Activated B cell treated with CpG ODN at 0.5 μM for 24 hours (primary cell): ENCODE measurements at regions of chr3 and their contacts with region 1.

Region 1: GRCh38 chr3:141311496-141312353 is 56.6 kb upstream of the ZBTB38 start:
- DNase-seq: peak; percentile 92
- ATAC-seq: peak; percentile 97
- H3K4me3 Mint-ChIP-seq: peak overlapping the region; percentile 100
- H3K27ac Mint-ChIP-seq: peak overlapping the region; percentile 98
- H3K4me1 Mint-ChIP-seq: peaks cover 19% of the 10 kb centered on the region
- H3K27me3 Mint-ChIP-seq: no peaks in the 10 kb centered on the region
- CTCF ChIP-seq: no peak

Region 2: GRCh38 chr3:141294848-141295247 is 16.9 kb before region 1 on chr3:
- CTCF ChIA-PET with region 1: no interaction called
- POLR2A ChIA-PET with region 1: interaction called, 10 read pairs
- intact Hi-C with region 1: no loop called
- DNase-seq: no peak
- ATAC-seq: no peak
- H3K4me3 Mint-ChIP-seq: peak overlapping the region; percentile 71
- H3K27ac Mint-ChIP-seq: no peak overlapping the region
- H3K4me1 Mint-ChIP-seq: peaks cover 14% of the 10 kb centered on the region
- H3K27me3 Mint-ChIP-seq: no peaks in the 10 kb centered on the region
- CTCF ChIP-seq: no peak

Region 3: DNA sequence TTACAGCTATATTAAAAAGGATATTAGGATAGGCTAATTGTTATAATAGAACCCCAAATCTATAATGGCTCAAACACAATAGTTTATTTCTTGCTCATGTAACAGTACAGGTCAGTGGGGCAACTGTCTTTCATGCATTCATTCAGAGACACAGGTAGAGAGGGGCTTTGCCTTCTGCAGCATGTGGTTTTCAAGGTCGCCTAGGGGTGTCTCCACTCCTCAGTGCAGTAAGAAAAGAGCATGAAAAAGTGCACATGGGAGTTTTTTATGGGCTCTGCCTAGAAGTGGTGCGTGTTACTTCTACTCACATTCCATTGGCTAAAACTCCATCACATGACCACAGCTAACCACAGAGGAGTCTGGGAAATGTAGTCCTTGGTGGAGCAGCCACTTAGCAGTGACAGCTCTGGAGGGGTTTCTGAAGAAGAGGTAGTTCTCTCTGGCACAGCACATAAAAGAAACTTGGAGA is 58.4 kb after region 1 on chr3:
- CTCF ChIA-PET with region 1: interaction called, 7 read pairs
- POLR2A ChIA-PET with region 1: interaction called, 4 read pairs
- intact Hi-C with region 1: loop called (anchors 1 kb)
- DNase-seq: no peak
- ATAC-seq: peak; percentile 99
- H3K4me3 Mint-ChIP-seq: no peak overlapping the region
- H3K27ac Mint-ChIP-seq: peak overlapping the region; percentile 15
- H3K4me1 Mint-ChIP-seq: peaks cover 13% of the 10 kb centered on the region
- H3K27me3 Mint-ChIP-seq: no peaks in the 10 kb centered on the region
- CTCF ChIP-seq: no peak

Region 4: GRCh38 chr3:141452036-141452435 is 140.3 kb after region 1 on chr3:
- CTCF ChIA-PET with region 1: interaction called, 112 read pairs
- POLR2A ChIA-PET with region 1: interaction called, 20 read pairs
- intact Hi-C with region 1: loop called (anchors 1 kb)
- DNase-seq: no peak
- ATAC-seq: peak; percentile 87
- H3K4me3 Mint-ChIP-seq: no peak overlapping the region
- H3K27ac Mint-ChIP-seq: no peak overlapping the region
- H3K4me1 Mint-ChIP-seq: peaks cover 5% of the 10 kb centered on the region
- H3K27me3 Mint-ChIP-seq: no peaks in the 10 kb centered on the region
- CTCF ChIP-seq: no peak

Region 5: GRCh38 chr3:141561426-141562034 is 249.8 kb after region 1 on chr3:
- CTCF ChIA-PET with region 1: interaction called, 11 read pairs
- POLR2A ChIA-PET with region 1: interaction called, 6 read pairs
- intact Hi-C with region 1: loop called (anchors 2 kb)
- DNase-seq: no peak
- ATAC-seq: peak; percentile 65
- H3K4me3 Mint-ChIP-seq: no peak overlapping the region
- H3K27ac Mint-ChIP-seq: no peak overlapping the region
- H3K4me1 Mint-ChIP-seq: peaks cover 6% of the 10 kb centered on the region
- H3K27me3 Mint-ChIP-seq: no peaks in the 10 kb centered on the region
- CTCF ChIP-seq: no peak

Region 6: GRCh38 chr3:142226484-142226883 is 914.8 kb after region 1 on chr3:
- CTCF ChIA-PET with region 1: no interaction called
- POLR2A ChIA-PET with region 1: no interaction called
- intact Hi-C with region 1: loop called (anchors 1 kb)
- DNase-seq: no peak
- ATAC-seq: no peak
- H3K4me3 Mint-ChIP-seq: peak overlapping the region; percentile 38
- H3K27ac Mint-ChIP-seq: no peak overlapping the region
- H3K4me1 Mint-ChIP-seq: peaks cover 6% of the 10 kb centered on the region
- H3K27me3 Mint-ChIP-seq: no peaks in the 10 kb centered on the region
- CTCF ChIP-seq: no peak